ENCODE measurements at regions of chr1 and their contacts with region 1.

Region 1: GRCh38 chr1:205711104-205712020 is 31.1 kb upstream of the SLC45A3 start:
- DNase-seq: peak; percentile 65
- ATAC-seq: peak; percentile 87
- H3K4me3 Mint-ChIP-seq: no peak overlapping the region
- H3K27ac Mint-ChIP-seq: peak overlapping the region; percentile 77
- H3K4me1 Mint-ChIP-seq: peaks cover 36% of the 10 kb centered on the region
- H3K27me3 Mint-ChIP-seq: no peaks in the 10 kb centered on the region
- CTCF ChIP-seq: peak; percentile 75

Region 2: GRCh38 chr1:205610036-205610435 is 101.3 kb before region 1 on chr1:
- CTCF ChIA-PET with region 1: no interaction called
- POLR2A ChIA-PET with region 1: interaction called, 10 read pairs
- DNase-seq: no peak
- ATAC-seq: peak; percentile 41; the same call in 1 of the 2 replicates
- H3K4me3 Mint-ChIP-seq: no peak overlapping the region
- H3K27ac Mint-ChIP-seq: peak overlapping the region; percentile 49; the same call in 1 of the 2 replicates
- H3K4me1 Mint-ChIP-seq: no peaks in the 10 kb centered on the region
- H3K27me3 Mint-ChIP-seq: no peaks in the 10 kb centered on the region
- CTCF ChIP-seq: no peak

Region 3: DNA sequence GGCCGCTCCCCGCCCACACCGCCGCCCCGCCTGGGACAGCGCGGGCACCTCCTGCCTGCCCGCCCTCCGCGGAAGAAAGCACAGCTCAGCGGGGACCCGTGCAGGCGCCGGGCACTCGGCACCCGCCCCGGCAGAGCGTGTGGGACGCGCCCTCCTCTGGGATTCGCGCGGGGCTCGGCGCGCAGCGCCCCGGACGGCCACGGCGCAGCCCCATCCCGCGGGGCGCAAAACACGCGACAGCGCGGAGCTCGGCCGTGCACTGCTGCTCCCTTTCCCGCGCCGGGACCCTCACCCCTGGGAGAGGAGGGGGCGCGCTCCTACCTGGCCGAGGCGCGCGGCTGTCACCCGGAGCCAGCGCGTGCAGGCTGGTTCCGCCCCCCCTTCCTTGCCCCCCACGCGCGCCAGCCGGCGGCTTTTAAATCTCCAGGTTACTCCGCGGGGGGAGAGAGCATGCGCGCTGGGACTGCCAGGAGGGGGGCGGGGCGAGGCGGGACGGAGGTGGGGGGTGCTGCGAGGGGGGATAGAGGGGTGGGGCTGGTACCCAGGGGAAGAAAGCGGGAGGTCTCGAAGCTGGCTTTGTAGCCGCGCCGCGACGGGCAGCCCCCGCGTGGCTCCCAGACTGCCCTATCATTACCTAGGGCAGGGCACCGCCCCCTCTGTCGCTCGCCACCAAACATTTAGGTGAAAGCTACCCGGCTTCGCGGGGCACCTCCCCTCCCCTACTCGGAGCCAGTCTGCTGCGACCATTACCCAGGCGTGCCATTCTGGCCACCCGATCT is 31.1 kb before region 1 on chr1 and contains the start of gene SLC45A3:
- CTCF ChIA-PET with region 1: interaction called, 12 read pairs
- POLR2A ChIA-PET with region 1: interaction called, 3 read pairs
- DNase-seq: peak; percentile 65
- ATAC-seq: peak; percentile 60
- H3K4me3 Mint-ChIP-seq: peak within 1 kb of the TSS; percentile 77
- H3K27ac Mint-ChIP-seq: no peak within 1 kb of the TSS
- H3K4me1 Mint-ChIP-seq: peaks cover 49% of the 10 kb centered on the region
- H3K27me3 Mint-ChIP-seq: peaks cover 7% of the 10 kb centered on the region
- CTCF ChIP-seq: no peak
- total RNA-seq, gene SLC45A3: 14.8 to 15.2 TPM (median 15.0 TPM) in 3 replicates

Region 4: DNA sequence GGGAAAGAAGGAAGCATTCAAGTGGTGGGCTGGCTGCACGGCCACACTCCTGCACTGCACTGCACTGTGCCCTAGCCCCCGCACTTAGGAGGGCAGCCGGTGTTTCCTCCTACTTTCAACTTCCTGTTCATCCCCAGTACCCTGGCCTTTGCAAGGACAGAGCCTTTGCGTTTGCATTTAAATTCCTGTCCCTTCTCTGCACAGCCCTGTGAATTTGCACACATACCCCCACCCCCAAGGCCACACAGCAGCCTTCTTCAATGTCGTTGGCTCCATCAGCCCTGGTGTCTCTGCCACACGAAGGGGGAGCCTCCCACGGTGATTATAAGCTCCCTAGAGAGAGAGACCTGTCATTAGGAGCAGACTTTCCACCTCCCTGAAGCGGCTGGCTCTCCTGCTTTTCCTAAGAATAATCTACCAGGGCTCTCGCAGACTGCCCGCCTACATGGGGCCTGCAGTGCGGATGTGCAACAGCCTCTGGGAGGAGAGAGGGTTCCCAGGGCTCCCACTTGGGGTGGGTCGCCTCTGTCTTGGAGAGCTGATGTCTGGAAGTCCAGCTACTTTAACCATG is 17.9 kb before region 1 on chr1:
- CTCF ChIA-PET with region 1: interaction called, 18 read pairs
- POLR2A ChIA-PET with region 1: interaction called, 3 read pairs
- DNase-seq: no peak
- ATAC-seq: peak; percentile 53
- H3K4me3 Mint-ChIP-seq: no peak overlapping the region
- H3K27ac Mint-ChIP-seq: peak overlapping the region; percentile 24; the same call in 1 of the 2 replicates
- H3K4me1 Mint-ChIP-seq: peaks cover 20% of the 10 kb centered on the region
- H3K27me3 Mint-ChIP-seq: no peaks in the 10 kb centered on the region
- CTCF ChIP-seq: no peak

Region 5: GRCh38 chr1:205700865-205701401 is 10.4 kb before region 1 on chr1:
- CTCF ChIA-PET with region 1: interaction called, 17 read pairs
- POLR2A ChIA-PET with region 1: no interaction called
- DNase-seq: peak; percentile 34
- ATAC-seq: peak; percentile 57
- H3K4me3 Mint-ChIP-seq: no peak overlapping the region
- H3K27ac Mint-ChIP-seq: no peak overlapping the region
- H3K4me1 Mint-ChIP-seq: peaks cover 17% of the 10 kb centered on the region
- H3K27me3 Mint-ChIP-seq: no peaks in the 10 kb centered on the region
- CTCF ChIP-seq: no peak